IMR-90 (cell line): ENCODE measurements at regions of chr3 and their contacts with region 1.

Region 1: GRCh38 chr3:129534428-129535027 is 6.1 kb downstream of the RHO start:
- DNase-seq: no peak
- ATAC-seq: no peak
- H3K4me3 ChIP-seq: no peak overlapping the region
- H3K27ac ChIP-seq: no peak overlapping the region
- H3K4me1 ChIP-seq: peaks cover 14% of the 10 kb centered on the region
- H3K27me3 ChIP-seq: peaks cover 5% of the 10 kb centered on the region; the same call in 1 of the 2 replicates
- CTCF ChIP-seq: no peak
- POLR2A ChIP-seq: no peak
- RAD21 ChIP-seq: no peak

Region 2: DNA sequence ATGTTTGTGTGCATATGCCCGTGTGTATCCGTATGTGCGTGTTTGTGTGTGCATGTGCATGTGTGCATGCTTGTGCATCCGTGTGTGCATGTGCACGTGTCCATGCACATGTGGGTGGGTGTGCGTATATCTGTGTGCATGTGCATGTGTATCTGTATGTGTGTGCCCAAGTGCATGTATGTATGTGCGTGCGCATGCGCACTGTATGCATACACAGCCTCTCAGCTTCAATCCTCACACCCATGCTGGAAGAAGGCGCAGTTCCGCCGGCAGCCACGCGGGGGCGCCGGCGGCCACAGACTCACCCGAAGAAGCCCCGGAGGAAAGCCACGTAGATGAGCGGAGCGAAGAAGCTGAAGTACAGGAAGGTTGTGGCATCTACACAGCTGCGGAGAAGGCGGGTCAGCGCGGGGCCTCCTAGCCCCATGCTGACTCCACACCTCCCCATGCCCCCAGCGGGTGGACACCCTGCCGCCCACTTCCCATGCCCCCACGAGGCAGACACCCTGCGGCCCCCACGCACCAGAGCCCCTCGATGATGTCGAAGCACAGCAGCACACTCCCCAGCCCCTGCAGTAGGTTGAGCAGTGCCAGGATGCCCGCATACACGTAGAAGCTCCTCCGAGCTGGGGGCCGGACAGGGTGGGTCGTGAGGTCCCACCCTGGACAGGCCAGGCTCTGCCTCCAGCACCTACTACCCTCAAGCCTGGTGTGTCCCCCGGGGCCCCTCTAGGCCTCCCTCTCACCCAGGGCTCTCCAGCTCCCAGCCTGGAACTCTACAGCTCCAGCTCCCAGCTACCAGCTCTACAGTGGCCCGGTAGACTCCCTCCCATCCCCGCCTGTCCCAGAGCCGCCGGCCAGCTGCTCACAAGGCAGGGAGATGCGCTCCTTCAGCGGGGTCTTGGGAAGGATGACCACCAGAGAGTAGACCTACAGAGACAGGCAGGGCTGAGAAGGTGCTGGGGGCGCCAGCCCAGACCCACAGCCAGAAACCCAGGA is 1959.3 kb before region 1 on chr3:
- CTCF ChIA-PET with region 1: no interaction called
- POLR2A ChIA-PET with region 1: no interaction called
- dilution Hi-C with region 1: no loop called
- in situ Hi-C with region 1: no loop called
- intact Hi-C with region 1: no loop called
- DNase-seq: peak; percentile 87
- ATAC-seq: peak; percentile 97
- H3K4me3 ChIP-seq: no peak overlapping the region
- H3K27ac ChIP-seq: no peak overlapping the region
- H3K4me1 ChIP-seq: peaks cover 3% of the 10 kb centered on the region; the same call in 1 of the 2 replicates
- H3K27me3 ChIP-seq: no peaks in the 10 kb centered on the region
- CTCF ChIP-seq: peak; percentile 99
- POLR2A ChIP-seq: no peak
- RAD21 ChIP-seq: peak; percentile 92

Region 3: DNA sequence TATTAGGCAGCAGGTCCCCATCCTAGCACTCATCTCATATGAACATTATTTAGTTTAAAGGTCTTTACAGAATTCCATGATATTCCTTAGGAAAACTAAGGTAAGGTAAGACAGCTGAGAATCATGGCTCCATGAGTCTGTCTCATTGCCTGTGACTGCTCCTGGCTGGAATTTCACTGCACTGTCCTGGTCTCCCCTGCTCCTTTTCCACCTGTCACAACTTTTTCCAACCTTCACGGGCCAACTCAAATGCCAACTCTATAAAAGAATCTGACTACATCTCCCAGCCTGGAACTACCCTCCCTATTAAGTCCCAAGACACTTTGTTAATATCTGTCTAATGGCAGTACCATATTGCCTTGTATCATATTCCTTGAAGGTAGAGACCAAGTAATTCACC is 358.5 kb before region 1 on chr3:
- CTCF ChIA-PET with region 1: no interaction called
- POLR2A ChIA-PET with region 1: no interaction called
- dilution Hi-C with region 1: no loop called
- in situ Hi-C with region 1: no loop called
- intact Hi-C with region 1: no loop called
- DNase-seq: no peak
- ATAC-seq: no peak
- H3K4me3 ChIP-seq: no peak overlapping the region
- H3K27ac ChIP-seq: no peak overlapping the region
- H3K4me1 ChIP-seq: peaks cover 8% of the 10 kb centered on the region
- H3K27me3 ChIP-seq: no peaks in the 10 kb centered on the region
- CTCF ChIP-seq: no peak
- POLR2A ChIP-seq: no peak
- RAD21 ChIP-seq: no peak

Region 4: GRCh38 chr3:129330409-129330808 is 204.1 kb before region 1 on chr3:
- CTCF ChIA-PET with region 1: no interaction called
- POLR2A ChIA-PET with region 1: no interaction called
- dilution Hi-C with region 1: no loop called
- in situ Hi-C with region 1: no loop called
- intact Hi-C with region 1: no loop called
- DNase-seq: peak; percentile 27
- ATAC-seq: peak; percentile 10; the same call in 1 of the 2 replicates
- H3K4me3 ChIP-seq: no peak overlapping the region
- H3K27ac ChIP-seq: no peak overlapping the region
- H3K4me1 ChIP-seq: 0 out of 2 replicates have a peak, but pooled peaks cover 2% of the 10 kb centered on the region
- H3K27me3 ChIP-seq: peaks cover 2% of the 10 kb centered on the region; the same call in 1 of the 2 replicates
- CTCF ChIP-seq: no peak
- POLR2A ChIP-seq: no peak
- RAD21 ChIP-seq: no peak

Region 5: GRCh38 chr3:129449279-129450115 is 85.0 kb before region 1 on chr3:
- CTCF ChIA-PET with region 1: no interaction called
- POLR2A ChIA-PET with region 1: no interaction called
- dilution Hi-C with region 1: no loop called
- in situ Hi-C with region 1: no loop called
- intact Hi-C with region 1: loop called (anchors 5 kb)
- DNase-seq: no peak
- ATAC-seq: no peak
- H3K4me3 ChIP-seq: no peak overlapping the region
- H3K27ac ChIP-seq: no peak overlapping the region
- H3K4me1 ChIP-seq: peaks cover 1% of the 10 kb centered on the region; the same call in 1 of the 2 replicates
- H3K27me3 ChIP-seq: no peaks in the 10 kb centered on the region
- CTCF ChIP-seq: no peak
- POLR2A ChIP-seq: no peak
- RAD21 ChIP-seq: no peak

Region 6: DNA sequence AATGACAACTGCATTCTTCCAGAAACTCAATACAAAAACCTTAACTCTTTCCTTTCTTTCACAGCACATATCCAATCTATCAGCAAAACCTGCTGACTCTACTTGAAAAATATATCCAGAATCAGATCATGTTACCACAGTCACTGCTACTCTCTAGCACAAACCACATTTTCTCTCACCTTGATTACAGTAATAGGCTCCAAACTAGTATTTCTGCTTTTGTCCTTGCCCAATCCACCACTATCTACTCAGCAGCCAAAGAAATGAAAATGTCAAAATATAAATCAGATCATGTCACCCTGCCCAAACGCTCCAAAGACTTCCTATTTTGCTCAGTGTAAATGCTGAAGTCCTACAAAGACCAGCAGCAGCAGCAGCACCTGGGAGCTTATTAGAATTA is 343.8 kb after region 1 on chr3:
- CTCF ChIA-PET with region 1: no interaction called
- POLR2A ChIA-PET with region 1: no interaction called
- dilution Hi-C with region 1: no loop called
- in situ Hi-C with region 1: no loop called
- intact Hi-C with region 1: no loop called
- DNase-seq: no peak
- ATAC-seq: no peak
- H3K4me3 ChIP-seq: no peak overlapping the region
- H3K27ac ChIP-seq: no peak overlapping the region
- H3K4me1 ChIP-seq: no peaks in the 10 kb centered on the region
- H3K27me3 ChIP-seq: no peaks in the 10 kb centered on the region
- CTCF ChIP-seq: no peak
- POLR2A ChIP-seq: no peak
- RAD21 ChIP-seq: no peak